IMR-90 (cell line): ENCODE measurements at regions of chr4 and their contacts with region 1.

Region 1: GRCh38 chr4:122003335-122003734 is 51.5 kb upstream of the TRPC3 start:
- DNase-seq: no peak
- ATAC-seq: no peak
- H3K4me3 ChIP-seq: no peak overlapping the region
- H3K27ac ChIP-seq: no peak overlapping the region
- H3K4me1 ChIP-seq: peaks cover 8% of the 10 kb centered on the region
- H3K27me3 ChIP-seq: no peaks in the 10 kb centered on the region
- CTCF ChIP-seq: peak; percentile 18; the same call in 1 of the 2 replicates
- POLR2A ChIP-seq: no peak
- RAD21 ChIP-seq: no peak

Region 2: DNA sequence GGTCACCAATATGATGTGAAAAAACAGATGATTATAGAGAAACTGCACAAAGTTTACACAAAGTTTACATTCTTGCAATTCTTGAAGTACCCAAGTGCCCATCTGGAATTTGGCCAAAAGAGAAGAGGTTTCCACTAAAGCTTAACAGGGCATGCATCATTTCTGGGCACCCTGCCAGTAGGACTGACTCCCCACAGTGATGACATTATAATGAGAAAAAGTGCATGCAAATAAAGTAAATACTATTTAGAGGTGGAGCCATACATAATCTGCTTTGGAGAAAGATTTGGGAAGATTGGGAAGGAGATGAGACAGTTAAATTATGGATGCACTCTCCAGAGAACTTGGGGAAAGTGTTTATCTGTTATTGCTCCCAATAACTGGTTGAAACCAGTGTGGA is 42.2 kb after region 1 on chr4:
- CTCF ChIA-PET with region 1: no interaction called
- POLR2A ChIA-PET with region 1: no interaction called
- dilution Hi-C with region 1: no loop called
- in situ Hi-C with region 1: no loop called
- intact Hi-C with region 1: loop called (anchors 2 kb)
- DNase-seq: peak; percentile 96
- ATAC-seq: peak; percentile 93
- H3K4me3 ChIP-seq: no peak overlapping the region
- H3K27ac ChIP-seq: no peak overlapping the region
- H3K4me1 ChIP-seq: peaks cover 2% of the 10 kb centered on the region; the same call in 1 of the 2 replicates
- H3K27me3 ChIP-seq: no peaks in the 10 kb centered on the region
- CTCF ChIP-seq: no peak
- POLR2A ChIP-seq: no peak
- RAD21 ChIP-seq: no peak

Region 3: GRCh38 chr4:122151982-122152710 is 148.8 kb after region 1 on chr4 and contains the start of gene BLTP1:
- CTCF ChIA-PET with region 1: no interaction called
- POLR2A ChIA-PET with region 1: no interaction called
- dilution Hi-C with region 1: no loop called
- in situ Hi-C with region 1: no loop called
- intact Hi-C with region 1: loop called (anchors 5 kb)
- DNase-seq: peak; percentile 75
- ATAC-seq: peak; percentile 99
- H3K4me3 ChIP-seq: peak within 1 kb of the TSS; percentile 91
- H3K27ac ChIP-seq: peak within 1 kb of the TSS; percentile 81
- H3K4me1 ChIP-seq: no peaks in the 10 kb centered on the region
- H3K27me3 ChIP-seq: no peaks in the 10 kb centered on the region
- CTCF ChIP-seq: no peak
- POLR2A ChIP-seq: no peak
- RAD21 ChIP-seq: 0 out of 2 replicates have a peak, but pooled peaks have one; percentile 9
- total RNA-seq, gene BLTP1: 92.7 and 111 TPM in 2 replicates